Right ventricle myocardium inferior (tissue), 1 donor: ENCODE measurements at regions of chr4 and their contacts with region 1.

Region 1: GRCh38 chr4:83771113-83771705 is 235.3 kb downstream of the GPAT3 start:
- DNase-seq: no peak
- ATAC-seq: peak; percentile 71

Region 2: GRCh38 chr4:83473423-83473822 is 297.8 kb before region 1 on chr4:
- intact Hi-C with region 1: no loop called
- DNase-seq: no peak
- ATAC-seq: no peak

Region 3: GRCh38 chr4:83846193-83846830 is 75.1 kb after region 1 on chr4:
- intact Hi-C with region 1: loop called (anchors 2 kb)
- DNase-seq: no peak
- ATAC-seq: peak; percentile 70

Region 4: DNA sequence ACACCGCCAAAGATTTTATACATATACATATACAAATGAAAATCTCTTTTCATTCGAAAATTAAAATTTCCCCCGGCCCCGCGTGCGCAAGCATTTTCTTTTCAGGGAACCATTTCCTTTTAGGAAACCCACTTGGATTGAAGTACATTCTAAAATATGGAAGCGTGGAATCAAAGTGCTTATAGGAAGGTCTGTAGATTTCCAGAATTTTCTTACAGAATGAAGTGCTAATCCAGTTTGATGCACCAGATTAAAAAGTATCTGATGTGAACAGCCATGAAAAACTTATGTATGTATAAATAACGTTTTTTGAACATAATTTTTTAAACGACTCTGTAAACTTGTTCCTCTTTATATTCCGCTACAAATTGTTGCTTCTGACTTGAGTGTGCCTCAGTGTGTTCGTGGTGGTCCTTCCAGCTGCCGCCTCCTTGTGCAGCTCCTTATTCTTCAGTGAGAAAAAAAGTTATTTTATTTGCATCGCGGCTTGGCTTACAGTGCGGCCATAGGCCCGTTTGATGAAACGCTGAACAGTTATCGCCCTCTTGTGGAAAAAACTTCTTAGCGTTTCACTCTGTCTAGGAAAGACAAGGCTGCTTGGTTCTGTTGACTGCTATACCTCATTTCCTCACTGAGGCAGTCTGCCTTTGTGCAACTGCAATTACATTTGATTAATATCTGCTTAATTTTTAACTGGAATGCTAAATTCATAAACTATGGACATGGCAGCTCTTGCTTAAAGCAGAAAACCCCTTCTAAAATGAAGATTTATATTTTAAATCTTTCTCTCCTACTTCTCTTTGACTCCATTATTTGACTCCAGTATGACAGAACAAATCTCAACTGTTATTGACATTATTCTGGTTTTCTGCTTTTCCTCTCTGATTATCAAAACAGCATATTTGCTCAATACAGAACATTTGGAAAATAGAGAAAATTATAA is 732.6 kb after region 1 on chr4:
- intact Hi-C with region 1: loop called (anchors 5 kb)
- DNase-seq: no peak
- ATAC-seq: no peak